Right ventricle myocardium superior (tissue), 1 donor: ENCODE measurements at regions of chr15 and their contacts with region 1.

Region 1: DNA sequence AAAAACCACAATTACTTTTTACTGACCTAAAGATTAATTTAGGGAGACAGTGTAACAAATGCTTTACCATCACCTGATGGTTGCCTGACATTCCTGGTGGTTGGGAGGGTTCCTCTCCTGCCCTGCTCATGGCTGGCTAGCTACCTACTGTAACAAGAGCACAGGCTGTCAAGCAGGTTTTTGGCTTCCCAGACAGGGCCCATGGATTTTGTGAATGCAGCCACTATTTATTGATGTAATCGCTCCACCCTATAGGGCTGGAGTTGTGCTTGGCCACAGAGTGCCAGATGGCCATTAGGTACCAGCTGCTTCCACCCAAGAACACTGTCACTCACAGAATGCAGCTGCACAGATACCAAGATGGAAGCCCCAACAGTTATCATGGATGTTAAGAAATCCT is 31.0 kb upstream of the KLHL25 start:
- DNase-seq: no peak
- ATAC-seq: no peak

Region 2: GRCh38 chr15:85367741-85368140 is 458.0 kb before region 1 on chr15:
- intact Hi-C with region 1: no loop called
- DNase-seq: no peak
- ATAC-seq: no peak

Region 3: DNA sequence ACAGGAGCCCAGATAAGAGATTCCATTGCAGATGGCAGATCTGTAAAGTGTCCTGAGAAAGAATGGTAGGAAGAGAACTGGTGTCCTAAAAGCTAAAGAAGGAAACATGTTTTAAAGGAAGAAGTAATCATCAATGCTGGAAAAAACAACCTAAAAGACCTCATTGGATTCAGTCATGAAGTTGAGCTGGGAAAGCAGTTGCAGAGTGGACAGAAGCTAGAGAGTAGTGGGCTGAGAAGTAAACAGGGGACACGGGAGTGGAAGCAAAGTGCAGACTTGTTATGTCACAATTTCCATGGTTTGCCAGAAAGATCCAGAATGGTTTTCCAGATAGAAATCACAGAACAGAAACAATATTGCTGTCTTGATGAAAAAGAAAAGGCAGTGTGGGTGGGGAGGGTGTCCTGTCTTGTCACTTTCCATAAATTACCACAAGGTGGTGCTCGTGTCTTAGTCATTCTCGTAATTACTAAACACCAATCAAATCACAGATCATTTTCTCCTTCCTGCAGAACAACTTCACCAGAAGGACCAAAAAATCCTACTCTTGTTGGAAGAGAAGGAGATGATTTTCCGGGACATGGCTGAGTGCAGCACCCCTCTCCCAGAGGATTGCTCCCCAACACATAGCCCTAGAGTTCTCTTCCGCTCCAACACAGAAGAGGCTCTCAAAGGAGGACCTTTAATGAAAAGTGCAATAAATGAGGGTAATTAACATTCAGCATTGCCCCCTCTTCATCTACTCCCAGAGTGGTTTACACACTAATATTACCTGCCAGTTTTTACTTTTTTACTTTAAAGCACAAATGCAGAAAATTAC is 95.5 kb before region 1 on chr15:
- intact Hi-C with region 1: loop called (anchors 5 kb)
- DNase-seq: no peak
- ATAC-seq: peak; percentile 65